ENCODE measurements at regions of chr7 and their contacts with region 1.

Region 1: GRCh38 chr7:80671744-80672143 is 33.3 kb downstream of the CD36 start:
- H3K4me3 ChIP-seq: no peak overlapping the region
- H3K27ac ChIP-seq: no peak overlapping the region
- H3K4me1 ChIP-seq: no peaks in the 10 kb centered on the region
- CTCF ChIP-seq: no peak

Region 2: GRCh38 chr7:80659120-80660055 is 12.4 kb before region 1 on chr7:
- CTCF ChIA-PET with region 1: interaction called, 11 read pairs
- POLR2A ChIA-PET with region 1: no interaction called
- H3K4me3 ChIP-seq: no peak overlapping the region
- H3K27ac ChIP-seq: no peak overlapping the region
- H3K4me1 ChIP-seq: no peaks in the 10 kb centered on the region
- CTCF ChIP-seq: no peak

Measured in HEK293 (cell line).